ENCODE measurements at regions of chr4 and their contacts with region 1.

Region 1: GRCh38 chr4:161496-162284 is 37.4 kb downstream of the ZNF718 start:
- DNase-seq: no peak
- H3K4me3 ChIP-seq: no peak overlapping the region
- H3K27ac ChIP-seq: no peak overlapping the region
- H3K4me1 ChIP-seq: no peaks in the 10 kb centered on the region
- H3K27me3 ChIP-seq: no peaks in the 10 kb centered on the region
- CTCF ChIP-seq: no peak

Region 2: DNA sequence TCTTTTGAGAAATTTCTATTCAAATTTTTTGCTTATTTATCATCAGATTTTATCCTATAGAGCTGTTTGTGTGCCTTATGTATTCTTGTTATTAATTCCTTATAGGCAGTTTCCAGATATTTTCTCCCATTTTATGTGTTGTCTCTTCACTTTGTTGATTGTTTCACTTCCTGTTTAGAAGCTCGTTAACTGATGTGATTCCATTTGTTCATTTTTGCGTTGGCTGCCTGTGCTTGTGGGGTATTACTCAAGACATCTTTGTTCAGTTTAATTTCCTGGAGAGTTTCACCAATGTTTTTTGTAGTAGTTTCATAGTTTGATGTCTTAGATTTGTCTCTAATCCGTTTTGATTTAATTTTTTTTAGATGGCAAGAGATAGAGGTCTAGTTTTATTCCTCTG is 22.8 kb before region 1 on chr4:
- CTCF ChIA-PET with region 1: no interaction called
- POLR2A ChIA-PET with region 1: no interaction called
- intact Hi-C with region 1: no loop called
- DNase-seq: no peak
- H3K4me3 ChIP-seq: no peak overlapping the region
- H3K27ac ChIP-seq: no peak overlapping the region
- H3K4me1 ChIP-seq: no peaks in the 10 kb centered on the region
- H3K27me3 ChIP-seq: no peaks in the 10 kb centered on the region
- CTCF ChIP-seq: no peak

Region 3: GRCh38 chr4:188076-188475 is 26.4 kb after region 1 on chr4:
- CTCF ChIA-PET with region 1: no interaction called
- POLR2A ChIA-PET with region 1: interaction called, 18 read pairs
- intact Hi-C with region 1: no loop called
- DNase-seq: no peak
- H3K4me3 ChIP-seq: no peak overlapping the region
- H3K27ac ChIP-seq: no peak overlapping the region
- H3K4me1 ChIP-seq: no peaks in the 10 kb centered on the region
- H3K27me3 ChIP-seq: no peaks in the 10 kb centered on the region
- CTCF ChIP-seq: no peak

Measured in PC-9 (cell line).